Naive thymus-derived CD4-positive, alpha-beta T cell (primary cell): ENCODE measurements at regions of chr3 and their contacts with region 1.

Region 1: GRCh38 chr3:15636003-15636709 is 34.6 kb downstream of the BTD start:
- DNase-seq: peak in 1 of 9 donors; percentile 43
- ATAC-seq: peak; percentile 84
- H3K4me3 ChIP-seq: peak overlapping the region; percentile 30
- H3K4me3 Mint-ChIP-seq: peak overlapping the region in 6 of 10 donors; percentile 6 to 61 (median 26)
- H3K27ac ChIP-seq: no peak overlapping the region
- H3K27ac Mint-ChIP-seq: peak overlapping the region in 3 of 9 donors; percentile 9 to 73 (median 64)
- H3K4me1 ChIP-seq: peaks cover 8 to 12% of the 10 kb centered on the region in 2 donors
- H3K4me1 Mint-ChIP-seq: peaks cover 19 to 45% (median 39%) of the 10 kb centered on the region in 7 donors
- H3K27me3 ChIP-seq: no peaks in the 10 kb centered on the region
- H3K27me3 Mint-ChIP-seq: no peaks in the 10 kb centered on the region

Region 2: GRCh38 chr3:15654891-15655290 is 18.7 kb after region 1 on chr3:
- CTCF ChIA-PET with region 1: no interaction called
- POLR2A ChIA-PET with region 1: no interaction called
- intact Hi-C with region 1: no loop called
- DNase-seq: no peak
- ATAC-seq: no peak
- H3K4me3 ChIP-seq: no peak overlapping the region
- H3K4me3 Mint-ChIP-seq: no peak overlapping the region
- H3K27ac ChIP-seq: no peak overlapping the region
- H3K27ac Mint-ChIP-seq: no peak overlapping the region
- H3K4me1 ChIP-seq: peaks cover 0 to 6% of the 10 kb centered on the region in 2 donors
- H3K4me1 Mint-ChIP-seq: peaks cover 5 to 32% (median 22%) of the 10 kb centered on the region in 7 donors
- H3K27me3 ChIP-seq: no peaks in the 10 kb centered on the region
- H3K27me3 Mint-ChIP-seq: peaks cover 0 to 19% (median 7%) of the 10 kb centered on the region in 5 donors

Region 3: DNA sequence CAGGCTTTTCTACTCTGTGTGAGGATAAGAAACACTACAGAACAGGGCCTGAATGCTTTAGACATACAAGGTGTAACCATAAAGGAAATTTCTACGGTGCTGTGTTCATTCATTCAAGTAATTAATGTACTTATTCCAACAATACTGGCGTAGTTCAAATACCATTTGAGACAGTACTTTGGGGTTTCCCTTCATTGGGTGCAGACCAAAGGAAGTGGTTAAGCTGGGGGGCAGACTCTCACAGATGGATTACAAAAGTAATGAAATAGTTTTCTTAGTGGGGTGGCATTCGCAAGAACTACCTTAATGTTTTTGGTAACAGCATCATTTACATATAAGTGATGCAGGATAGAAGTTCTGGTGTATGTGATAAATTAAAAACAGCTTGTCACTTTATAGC is 31.3 kb after region 1 on chr3:
- CTCF ChIA-PET with region 1: interaction called, 3 read pairs
- POLR2A ChIA-PET with region 1: interaction called, 3 read pairs
- intact Hi-C with region 1: loop called (anchors 2 kb)
- DNase-seq: peak in 7 of 9 donors; percentile 18 to 54 (median 28)
- ATAC-seq: peak; percentile 93
- H3K4me3 ChIP-seq: no peak overlapping the region
- H3K4me3 Mint-ChIP-seq: peak overlapping the region in 8 of 10 donors; percentile 13 to 37 (median 28)
- H3K27ac ChIP-seq: no peak overlapping the region
- H3K27ac Mint-ChIP-seq: peak overlapping the region in 2 of 9 donors; percentile 33 to 39
- H3K4me1 ChIP-seq: peaks cover 15 to 16% of the 10 kb centered on the region in 2 donors
- H3K4me1 Mint-ChIP-seq: peaks cover 6 to 33% (median 23%) of the 10 kb centered on the region in 7 donors
- H3K27me3 ChIP-seq: no peaks in the 10 kb centered on the region
- H3K27me3 Mint-ChIP-seq: no peaks in the 10 kb centered on the region